ENCODE measurements at regions of chr13 and their contacts with region 1.

Region 1: DNA sequence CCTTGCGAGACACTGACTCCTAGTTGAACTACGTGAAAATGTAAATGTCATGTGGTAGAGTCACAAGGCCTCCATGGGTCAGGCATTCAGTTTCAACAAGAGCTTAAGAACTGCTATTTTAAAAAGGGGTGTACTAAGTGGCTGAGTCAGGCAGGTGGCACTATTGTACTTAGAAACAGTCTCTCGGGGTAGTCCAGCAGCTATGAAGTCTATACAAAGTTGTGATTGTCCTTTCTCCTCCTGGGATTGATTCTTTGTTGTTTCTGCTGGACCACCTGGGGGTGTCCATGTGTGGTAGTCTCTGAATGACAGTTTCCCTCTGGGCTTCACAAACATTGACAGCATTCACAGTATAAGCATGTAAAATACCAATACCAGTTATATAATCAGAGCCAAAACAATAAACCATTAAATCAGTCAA is 33.0 kb downstream of the UGGT2 start:
- DNase-seq: no peak
- ATAC-seq: peak; percentile 81
- H3K4me3 ChIP-seq: no peak overlapping the region
- H3K27ac ChIP-seq: no peak overlapping the region
- H3K4me1 ChIP-seq: peaks cover 3 to 6% of the 10 kb centered on the region in 2 donors
- H3K27me3 ChIP-seq: no peaks in the 10 kb centered on the region

Region 2: DNA sequence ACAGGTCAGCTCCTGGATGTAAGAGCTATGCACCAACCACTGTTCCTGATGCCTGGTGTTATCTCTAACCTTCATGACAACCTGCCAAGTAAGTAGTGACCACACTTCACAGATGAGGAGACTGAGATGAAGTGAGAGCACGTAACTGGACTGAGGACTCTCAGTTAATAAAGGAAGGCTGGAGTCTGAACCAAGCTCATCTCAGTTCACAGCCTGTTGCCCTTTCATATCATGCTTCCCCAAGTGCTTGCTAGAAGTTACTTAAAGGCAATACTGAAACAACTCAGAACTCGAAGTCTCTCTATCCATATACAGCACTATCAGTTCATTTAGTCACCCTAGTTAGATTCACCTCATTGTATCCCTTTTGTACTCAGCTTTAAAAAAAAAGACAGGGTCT is 838.6 kb before region 1 on chr13:
- intact Hi-C with region 1: no loop called
- DNase-seq: no peak
- ATAC-seq: no peak
- H3K4me3 ChIP-seq: no peak overlapping the region
- H3K27ac ChIP-seq: no peak overlapping the region
- H3K4me1 ChIP-seq: no peaks in the 10 kb centered on the region
- H3K27me3 ChIP-seq: no peaks in the 10 kb centered on the region

Region 3: GRCh38 chr13:96075953-96076543 is 55.9 kb after region 1 on chr13:
- intact Hi-C with region 1: loop called in 1 of 2 experiments (anchors 2 kb)
- DNase-seq: no peak
- ATAC-seq: no peak
- H3K4me3 ChIP-seq: no peak overlapping the region
- H3K27ac ChIP-seq: no peak overlapping the region
- H3K4me1 ChIP-seq: no peaks in the 10 kb centered on the region
- H3K27me3 ChIP-seq: peaks cover 0 to 2% of the 10 kb centered on the region in 2 donors

Region 4: DNA sequence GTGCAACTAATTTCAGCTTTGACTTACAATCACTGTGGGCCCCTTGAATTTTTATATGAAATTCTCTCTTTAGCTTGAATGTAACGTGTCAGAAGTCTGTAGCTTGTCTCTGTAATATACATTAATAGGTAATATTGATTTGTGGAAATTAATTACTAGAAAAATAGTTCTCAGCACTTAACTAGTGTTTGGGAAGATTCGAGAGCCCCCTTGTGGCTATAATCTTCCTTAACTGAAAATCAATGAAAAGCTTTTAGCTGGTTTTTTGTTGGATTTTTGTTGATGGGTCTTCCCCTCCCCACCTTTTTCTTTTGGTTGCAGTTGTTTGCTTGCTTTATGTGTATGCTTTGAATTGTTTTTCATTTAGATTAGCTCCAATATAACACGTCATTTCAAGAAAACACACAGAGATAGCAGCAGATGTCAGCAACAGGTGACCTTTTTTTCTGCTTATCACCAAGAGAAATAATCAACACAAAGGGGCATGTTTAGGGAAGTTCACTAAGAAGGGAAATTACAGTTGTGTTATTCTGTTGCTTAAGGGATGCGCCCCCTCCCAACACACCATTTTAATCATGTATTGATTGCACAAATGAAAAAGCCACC is 797.3 kb after region 1 on chr13:
- intact Hi-C with region 1: loop called in 1 of 2 experiments (anchors 5 kb)
- DNase-seq: no peak
- ATAC-seq: no peak
- H3K4me3 ChIP-seq: no peak overlapping the region
- H3K27ac ChIP-seq: no peak overlapping the region
- H3K4me1 ChIP-seq: peaks cover 17 to 19% of the 10 kb centered on the region in 2 donors
- H3K27me3 ChIP-seq: no peaks in the 10 kb centered on the region

Region 5: DNA sequence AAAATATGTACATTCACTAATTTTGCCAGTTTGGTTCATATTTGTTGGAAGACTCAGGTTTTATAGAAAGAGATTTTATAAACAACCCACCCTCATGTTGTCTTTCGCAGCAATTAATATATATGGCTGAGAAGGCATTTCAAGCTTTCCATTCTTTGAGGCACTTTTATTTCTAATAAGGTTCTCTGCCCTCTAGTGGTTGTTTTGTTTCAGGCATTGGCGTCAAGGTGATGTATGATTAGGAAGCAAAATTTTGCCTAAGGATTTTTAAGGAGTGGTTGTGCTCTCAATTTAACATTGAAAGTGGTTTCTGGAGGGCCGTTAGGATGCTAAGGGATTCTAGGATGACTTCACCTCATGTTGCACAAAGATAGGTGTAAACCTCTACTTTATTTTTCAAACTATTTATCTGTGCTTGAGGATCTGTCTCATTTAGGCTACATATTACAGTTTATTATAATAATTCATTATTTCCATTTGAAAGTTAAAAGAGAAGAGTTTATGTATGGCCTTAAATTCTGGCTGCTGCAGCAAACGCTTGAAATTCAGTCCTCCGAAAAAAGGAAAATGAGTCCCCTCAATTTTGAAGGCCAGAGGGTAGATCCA is 938.2 kb after region 1 on chr13:
- intact Hi-C with region 1: loop called (anchors 2 to 10 kb)
- DNase-seq: no peak
- ATAC-seq: no peak
- H3K4me3 ChIP-seq: no peak overlapping the region
- H3K27ac ChIP-seq: no peak overlapping the region
- H3K4me1 ChIP-seq: no peaks in the 10 kb centered on the region
- H3K27me3 ChIP-seq: no peaks in the 10 kb centered on the region